Activated CD4-positive, alpha-beta T cell treated with anti-CD3 and anti-CD28 coated beads, Interleukin-2, amount 10 ng/mL, durations not matched to agents 24 days and 14 days (primary cell): ENCODE measurements at regions of chr3 and their contacts with region 1.

Region 1: DNA sequence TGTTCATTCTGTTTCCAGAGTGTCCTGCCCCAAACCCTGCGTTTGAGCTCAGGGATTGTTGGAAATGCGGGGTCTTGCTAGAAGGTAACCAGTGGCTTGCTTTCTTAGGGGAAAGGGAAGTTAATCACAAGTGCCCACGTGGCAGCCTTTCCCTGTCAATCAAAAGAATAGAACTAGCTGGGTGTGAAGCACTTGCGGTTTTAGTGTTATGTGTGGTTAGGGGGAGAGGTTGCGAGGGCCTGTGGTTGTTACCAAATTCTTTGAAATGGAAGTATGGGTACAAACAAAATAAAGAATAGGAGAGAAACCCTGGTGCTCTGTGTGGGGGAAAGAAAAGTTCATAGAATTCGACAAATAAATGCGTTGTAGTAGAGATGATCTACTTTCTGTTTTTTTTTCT is 67.6 kb downstream of the FNDC3B start:
- DNase-seq: peak; percentile 91
- H3K4me3 Mint-ChIP-seq: peak overlapping the region; percentile 84
- H3K27ac Mint-ChIP-seq: peak overlapping the region; percentile 89
- H3K4me1 Mint-ChIP-seq: peaks cover 64% of the 10 kb centered on the region
- H3K27me3 Mint-ChIP-seq: peaks cover 4% of the 10 kb centered on the region

Region 2: DNA sequence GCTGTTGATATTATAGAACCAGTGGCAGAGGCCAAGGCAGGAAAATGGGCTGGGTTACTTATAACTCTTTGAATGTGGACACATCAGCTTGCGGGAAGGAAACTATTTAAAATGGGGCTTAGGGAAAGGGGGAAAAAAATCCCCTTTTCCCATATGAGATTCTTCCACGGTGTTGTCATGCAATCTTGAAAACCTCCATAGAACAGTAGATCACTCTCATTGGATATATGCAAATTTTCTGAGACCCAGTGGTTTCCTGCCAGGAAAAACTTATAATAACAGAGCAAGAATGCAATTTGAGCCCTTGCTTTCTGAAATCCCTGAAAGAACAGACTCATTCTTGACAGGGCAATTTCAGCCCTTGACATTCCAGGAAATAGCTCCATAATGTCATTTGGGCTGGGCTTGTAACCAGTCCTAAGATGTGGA is 232.7 kb before region 1 on chr3:
- intact Hi-C with region 1: loop called (anchors 10 kb)
- DNase-seq: no peak
- H3K4me3 Mint-ChIP-seq: no peak overlapping the region
- H3K27ac Mint-ChIP-seq: no peak overlapping the region
- H3K4me1 Mint-ChIP-seq: peaks cover 12% of the 10 kb centered on the region
- H3K27me3 Mint-ChIP-seq: peaks cover 16% of the 10 kb centered on the region

Region 3: DNA sequence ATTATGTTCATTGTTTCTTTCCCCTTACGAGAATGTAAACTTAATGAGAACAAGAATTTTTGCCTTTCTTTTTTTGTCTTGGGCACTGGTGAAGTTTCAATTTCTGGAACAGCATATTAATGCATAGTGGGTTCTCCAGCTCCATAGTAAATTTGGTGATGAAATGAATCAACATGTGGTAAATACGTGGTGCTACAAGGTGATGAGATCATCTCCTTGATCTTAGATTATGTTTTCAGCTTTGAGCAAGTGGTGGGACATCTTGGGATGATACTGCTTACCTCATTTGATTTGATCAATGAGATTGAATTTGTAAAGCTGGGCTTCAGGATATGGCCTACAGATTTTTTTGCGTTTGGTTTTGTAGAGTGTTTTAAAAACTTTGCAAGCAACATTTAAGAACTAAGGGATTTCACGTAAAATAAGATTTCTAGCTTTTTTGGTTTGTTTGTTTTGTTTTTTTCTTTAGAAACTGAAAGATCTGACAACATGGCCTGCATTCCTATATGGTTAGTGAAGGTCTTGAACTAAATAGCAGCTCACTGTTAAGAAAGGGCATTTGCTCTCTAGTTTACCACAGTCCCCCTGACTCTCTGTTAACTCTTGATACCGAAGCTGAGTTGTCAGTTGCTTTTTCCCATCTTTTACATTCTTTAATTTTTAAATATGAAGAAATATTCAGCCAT is 22.0 kb before region 1 on chr3:
- intact Hi-C with region 1: loop called (anchors 1 kb)
- DNase-seq: peak; percentile 53
- H3K4me3 Mint-ChIP-seq: no peak overlapping the region
- H3K27ac Mint-ChIP-seq: peak overlapping the region; percentile 1
- H3K4me1 Mint-ChIP-seq: peaks cover 29% of the 10 kb centered on the region
- H3K27me3 Mint-ChIP-seq: no peaks in the 10 kb centered on the region

Region 4: DNA sequence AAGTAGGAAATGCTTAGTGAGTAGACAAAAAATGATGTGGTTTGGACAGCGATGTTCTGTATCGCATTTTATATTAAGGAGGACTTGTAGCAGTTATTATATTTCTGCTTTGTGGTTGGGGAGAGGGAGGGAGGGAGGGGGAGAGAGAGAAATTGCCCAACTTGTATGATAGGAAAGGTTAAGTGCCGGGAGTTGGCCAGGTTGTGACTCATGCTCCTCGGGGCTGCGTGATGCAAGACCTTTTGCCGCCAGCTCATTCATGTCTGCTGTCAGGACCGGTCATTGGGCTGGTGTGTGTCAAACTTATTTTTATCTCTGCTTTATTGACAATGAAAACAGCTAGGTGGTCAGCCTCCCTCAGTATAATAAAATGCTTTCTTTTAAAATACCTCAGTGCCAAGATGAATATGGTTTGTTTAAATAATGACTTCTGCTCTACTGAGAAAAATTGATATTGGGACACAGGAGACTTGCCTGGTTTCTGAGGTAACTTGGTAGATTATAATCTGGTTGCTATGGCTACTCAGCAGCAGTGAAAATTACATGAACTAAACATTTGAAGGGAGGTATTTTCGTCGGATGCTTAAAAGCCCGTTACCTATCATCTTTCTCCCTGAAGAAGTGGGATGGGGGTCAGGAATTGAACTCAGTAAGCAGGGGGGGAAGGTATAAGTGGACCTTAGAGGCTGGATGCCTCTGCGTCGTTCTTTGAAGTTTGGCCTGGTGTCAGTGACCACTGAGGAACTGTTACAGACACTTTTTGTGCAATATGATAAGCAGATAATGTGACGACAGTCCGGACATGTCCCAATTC is 23.1 kb after region 1 on chr3:
- intact Hi-C with region 1: loop called (anchors 1 kb)
- DNase-seq: peak; percentile 75
- H3K4me3 Mint-ChIP-seq: peak overlapping the region; percentile 30
- H3K27ac Mint-ChIP-seq: peak overlapping the region; percentile 83
- H3K4me1 Mint-ChIP-seq: peaks cover 53% of the 10 kb centered on the region
- H3K27me3 Mint-ChIP-seq: no peaks in the 10 kb centered on the region

Region 5: DNA sequence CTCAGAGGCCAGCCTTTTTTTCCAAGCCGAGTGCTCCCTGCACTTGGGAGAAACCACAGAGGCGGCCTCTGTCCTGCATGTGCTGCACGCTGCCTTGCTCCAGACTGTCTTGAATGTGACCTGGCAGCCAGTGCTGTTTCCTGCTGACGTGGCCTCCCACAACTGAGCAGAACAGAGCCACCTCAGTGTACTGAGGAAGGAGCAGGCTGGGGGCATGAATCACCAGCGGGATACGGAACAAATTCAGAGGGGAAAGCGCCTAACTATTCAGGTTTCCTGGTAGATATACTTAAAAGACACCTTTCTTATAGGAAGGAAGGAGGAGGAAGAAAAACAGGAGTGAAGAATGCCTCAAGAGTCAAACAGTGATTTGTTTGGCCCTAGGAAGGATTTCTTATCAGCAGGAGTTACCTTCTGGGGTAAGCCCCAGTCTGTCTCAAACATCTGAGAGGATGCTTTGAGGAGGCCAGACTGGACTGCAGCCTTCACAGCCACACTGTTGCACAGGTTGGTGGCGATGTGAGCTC is 46.4 kb after region 1 on chr3:
- intact Hi-C with region 1: loop called (anchors 2 kb)
- DNase-seq: peak; percentile 81
- H3K4me3 Mint-ChIP-seq: peak overlapping the region; percentile 24
- H3K27ac Mint-ChIP-seq: peak overlapping the region; percentile 35
- H3K4me1 Mint-ChIP-seq: peaks cover 28% of the 10 kb centered on the region
- H3K27me3 Mint-ChIP-seq: no peaks in the 10 kb centered on the region

Region 6: DNA sequence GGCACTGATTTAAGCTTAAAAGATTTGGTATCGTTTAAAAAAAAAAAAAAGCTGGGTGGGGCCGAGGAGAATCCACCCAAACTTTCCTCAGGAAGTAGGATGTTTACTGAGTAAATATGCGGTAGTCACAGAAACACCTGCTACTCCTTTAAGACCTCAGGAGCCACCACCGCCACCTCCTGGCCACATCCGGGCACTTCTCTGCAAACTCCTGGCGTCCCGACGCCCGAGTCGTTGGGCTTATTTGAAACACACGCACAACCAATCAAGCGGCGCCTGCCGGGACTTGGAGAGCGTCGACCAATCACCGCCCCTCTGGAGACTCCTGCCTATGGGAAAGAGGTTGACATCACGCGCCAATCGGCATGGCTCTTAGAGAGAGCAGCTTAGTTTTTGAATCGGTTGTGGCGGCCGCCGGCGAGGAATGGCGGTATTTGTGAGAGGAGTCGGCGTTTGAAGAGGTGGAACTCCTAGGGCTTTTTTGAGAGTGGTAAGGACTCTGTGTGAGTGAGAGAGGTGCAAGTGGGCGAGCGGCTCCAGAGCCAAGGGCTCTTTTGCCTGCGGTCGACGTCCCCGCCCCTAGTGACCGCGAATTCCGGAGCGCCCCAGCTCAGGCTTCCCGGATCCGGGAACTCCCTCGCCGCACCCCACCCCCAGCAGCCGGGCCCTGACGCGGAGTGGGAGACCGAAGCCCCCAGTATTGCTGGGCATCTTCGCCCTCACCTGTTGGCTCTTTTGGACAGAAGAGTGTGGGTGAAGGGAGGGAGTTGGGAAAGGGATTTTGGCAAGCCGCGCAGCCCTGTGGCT is 643.6 kb after region 1 on chr3 and contains the start of gene ECT2:
- intact Hi-C with region 1: no loop called
- DNase-seq: peak; percentile 99
- H3K4me3 Mint-ChIP-seq: peak within 1 kb of the TSS; percentile 88
- H3K27ac Mint-ChIP-seq: peak within 1 kb of the TSS; percentile 96
- H3K4me1 Mint-ChIP-seq: peaks cover 32% of the 10 kb centered on the region
- H3K27me3 Mint-ChIP-seq: peaks cover 6% of the 10 kb centered on the region
- total RNA-seq, gene ECT2: 36.2 and 40.4 TPM in 2 replicates